Heart left ventricle (tissue), 16 donors: ENCODE measurements at regions of chr14 and their contacts with region 1.

Region 1: DNA sequence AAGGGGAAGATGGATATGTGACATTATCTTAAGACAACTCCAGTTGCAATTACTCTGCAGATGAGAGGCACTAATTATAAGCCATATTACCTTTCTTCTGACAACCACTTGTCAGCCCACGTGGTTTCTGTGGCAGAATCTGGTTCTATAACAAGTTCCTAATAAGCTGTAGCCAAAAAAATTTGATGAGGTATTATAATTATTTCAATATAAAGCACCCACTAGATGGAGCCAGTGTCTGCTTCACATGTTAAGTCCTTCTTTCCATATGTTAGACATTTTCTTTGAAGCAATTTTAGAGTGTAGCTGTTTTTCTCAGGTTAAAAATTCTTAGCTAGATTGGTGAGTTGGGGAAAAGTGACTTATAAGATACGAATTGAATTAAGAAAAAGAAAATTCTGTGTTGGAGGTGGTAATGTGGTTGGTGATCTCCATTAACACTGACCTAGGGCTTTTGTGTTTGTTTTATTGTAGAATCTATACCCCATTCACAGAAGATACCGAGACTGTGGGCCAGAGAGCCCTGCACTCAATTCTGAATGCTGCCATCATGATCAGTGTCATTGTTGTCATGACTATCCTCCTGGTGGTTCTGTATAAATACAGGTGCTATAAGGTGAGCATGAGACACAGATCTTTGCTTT is 36.9 kb downstream of the PSEN1 start:
- DNase-seq: no peak
- ATAC-seq: no peak
- H3K4me3 ChIP-seq: no peak overlapping the region
- H3K27ac ChIP-seq: no peak overlapping the region
- H3K4me1 ChIP-seq: peaks cover 0 to 7% (median 0%) of the 10 kb centered on the region in 12 donors
- H3K27me3 ChIP-seq: no peaks in the 10 kb centered on the region
- CTCF ChIP-seq: peak; percentile 13 to 62 (median 44)
- POLR2A ChIP-seq: no peak

Region 2: GRCh38 chr14:73283608-73284379 is 110.6 kb after region 1 on chr14:
- intact Hi-C with region 1: loop called in 3 of 10 experiments (anchors 10 kb)
- DNase-seq: no peak
- ATAC-seq: no peak
- H3K4me3 ChIP-seq: no peak overlapping the region
- H3K27ac ChIP-seq: no peak overlapping the region
- H3K4me1 ChIP-seq: no peaks in the 10 kb centered on the region
- H3K27me3 ChIP-seq: no peaks in the 10 kb centered on the region
- CTCF ChIP-seq: peak in 6 of 12 donors; percentile 8 to 28 (median 20)
- POLR2A ChIP-seq: no peak

Region 3: GRCh38 chr14:73295198-73295796 is 122.1 kb after region 1 on chr14:
- intact Hi-C with region 1: loop called in 1 of 10 experiments (anchors 10 kb)
- DNase-seq: no peak
- ATAC-seq: no peak
- H3K4me3 ChIP-seq: no peak overlapping the region
- H3K27ac ChIP-seq: no peak overlapping the region
- H3K4me1 ChIP-seq: peaks cover 0 to 7% (median 0%) of the 10 kb centered on the region in 12 donors
- H3K27me3 ChIP-seq: no peaks in the 10 kb centered on the region
- CTCF ChIP-seq: peak; percentile 63 to 87 (median 78)
- POLR2A ChIP-seq: no peak

Region 4: DNA sequence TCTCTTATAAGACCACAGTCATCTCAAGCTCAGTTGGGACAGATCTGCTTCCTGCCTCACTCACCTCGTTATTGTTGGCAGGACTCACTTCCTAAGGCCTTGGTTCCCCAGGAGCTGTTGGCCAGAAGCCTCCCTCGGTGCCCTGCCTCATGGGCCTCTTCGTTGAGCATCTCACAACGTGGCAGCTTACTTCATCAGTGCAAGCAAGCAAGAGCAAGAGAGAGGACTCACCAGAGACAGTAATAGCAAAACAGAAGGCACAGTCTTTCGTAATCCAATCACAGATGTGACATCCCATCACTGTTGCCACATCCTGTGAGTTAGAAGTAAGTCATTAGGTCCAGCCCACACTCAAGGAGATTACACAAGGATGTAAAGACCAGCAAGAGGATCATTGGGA is 290.2 kb after region 1 on chr14:
- intact Hi-C with region 1: loop called in 1 of 10 experiments (anchors 5 kb)
- DNase-seq: peak in 3 of 5 donors; percentile 23 to 61 (median 27)
- ATAC-seq: peak in 2 of 4 donors; percentile 14 to 31
- H3K4me3 ChIP-seq: peak overlapping the region in 1 of 12 donors; percentile 30
- H3K27ac ChIP-seq: peak overlapping the region in 11 of 12 donors; percentile 48 to 87 (median 64)
- H3K4me1 ChIP-seq: peaks cover 12 to 90% (median 47%) of the 10 kb centered on the region in 12 donors
- H3K27me3 ChIP-seq: no peaks in the 10 kb centered on the region
- CTCF ChIP-seq: no peak
- POLR2A ChIP-seq: no peak

Region 5: GRCh38 chr14:73472185-73473114 is 299.2 kb after region 1 on chr14:
- intact Hi-C with region 1: loop called (anchors 1 to 10 kb)
- DNase-seq: no peak
- ATAC-seq: peak in 3 of 4 donors; percentile 79 to 88 (median 80)
- H3K4me3 ChIP-seq: no peak overlapping the region
- H3K27ac ChIP-seq: no peak overlapping the region
- H3K4me1 ChIP-seq: peaks cover 0 to 8% (median 0%) of the 10 kb centered on the region in 12 donors
- H3K27me3 ChIP-seq: no peaks in the 10 kb centered on the region
- CTCF ChIP-seq: peak; percentile 59 to 86 (median 74)
- POLR2A ChIP-seq: no peak

Region 6: DNA sequence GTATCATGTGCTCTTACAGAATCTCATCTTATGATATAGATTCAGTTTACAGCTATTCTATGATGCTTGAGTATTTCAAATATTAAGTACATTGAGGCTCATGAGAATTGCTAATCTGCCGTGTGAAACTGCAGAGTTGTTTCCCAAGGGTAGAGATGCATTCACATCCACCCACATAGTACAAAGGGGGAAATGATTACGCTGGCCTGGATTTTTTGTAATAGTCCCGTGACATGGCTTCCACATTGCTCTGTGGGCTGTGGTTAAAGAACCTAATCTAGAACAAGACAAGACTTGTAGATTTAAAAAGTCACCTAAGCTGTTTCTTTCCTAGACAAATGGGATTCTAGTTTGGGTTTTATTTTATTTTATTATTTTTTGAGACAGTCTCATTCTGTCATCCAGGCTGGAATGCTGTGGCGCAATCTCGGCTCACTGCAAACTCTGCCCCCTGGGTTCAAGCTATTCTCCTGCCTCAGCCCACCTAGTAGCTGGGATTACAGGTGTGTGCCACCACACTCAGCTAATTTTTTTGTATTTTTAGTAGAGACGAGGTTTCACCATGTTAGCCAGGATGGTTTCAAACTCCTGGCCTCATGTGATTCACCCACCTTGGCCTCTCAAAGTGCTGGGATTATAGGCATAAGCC is 304.5 kb after region 1 on chr14:
- intact Hi-C with region 1: loop called in 9 of 10 experiments (anchors 1 to 10 kb)
- DNase-seq: no peak
- ATAC-seq: peak in 3 of 4 donors; percentile 36 to 64 (median 56)
- H3K4me3 ChIP-seq: no peak overlapping the region
- H3K27ac ChIP-seq: peak overlapping the region in 1 of 12 donors; percentile 62
- H3K4me1 ChIP-seq: peaks cover 0 to 16% (median 0%) of the 10 kb centered on the region in 12 donors
- H3K27me3 ChIP-seq: no peaks in the 10 kb centered on the region
- CTCF ChIP-seq: no peak
- POLR2A ChIP-seq: no peak

Region 7: GRCh38 chr14:73802431-73803188 is 629.4 kb after region 1 on chr14:
- intact Hi-C with region 1: no loop called
- DNase-seq: no peak
- ATAC-seq: peak in 3 of 4 donors; percentile 39 to 50 (median 49)
- H3K4me3 ChIP-seq: no peak overlapping the region
- H3K27ac ChIP-seq: no peak overlapping the region
- H3K4me1 ChIP-seq: peaks cover 0 to 6% (median 0%) of the 10 kb centered on the region in 12 donors
- H3K27me3 ChIP-seq: no peaks in the 10 kb centered on the region
- CTCF ChIP-seq: no peak
- POLR2A ChIP-seq: no peak